ENCODE measurements at regions of chr19 and their contacts with region 1.

Region 1: GRCh38 chr19:12117203-12117970 is 22.8 kb downstream of the ZNF20 start:
- DNase-seq: no peak
- ATAC-seq: no peak
- H3K4me3 ChIP-seq: no peak overlapping the region
- H3K27ac ChIP-seq: no peak overlapping the region
- H3K4me1 ChIP-seq: no peaks in the 10 kb centered on the region
- H3K27me3 ChIP-seq: no peaks in the 10 kb centered on the region
- CTCF ChIP-seq: no peak
- POLR2A ChIP-seq: no peak
- RAD21 ChIP-seq: no peak

Region 2: GRCh38 chr19:11581740-11582139 is 535.6 kb before region 1 on chr19:
- CTCF ChIA-PET with region 1: no interaction called
- POLR2A ChIA-PET with region 1: no interaction called
- dilution Hi-C with region 1: no loop called
- in situ Hi-C with region 1: no loop called
- intact Hi-C with region 1: no loop called
- DNase-seq: peak; percentile 52
- ATAC-seq: peak; percentile 67
- H3K4me3 ChIP-seq: no peak overlapping the region
- H3K27ac ChIP-seq: no peak overlapping the region
- H3K4me1 ChIP-seq: peaks cover 4% of the 10 kb centered on the region
- H3K27me3 ChIP-seq: peaks cover 3% of the 10 kb centered on the region; the same call in 1 of the 2 replicates
- CTCF ChIP-seq: no peak
- POLR2A ChIP-seq: no peak
- RAD21 ChIP-seq: no peak

Region 3: DNA sequence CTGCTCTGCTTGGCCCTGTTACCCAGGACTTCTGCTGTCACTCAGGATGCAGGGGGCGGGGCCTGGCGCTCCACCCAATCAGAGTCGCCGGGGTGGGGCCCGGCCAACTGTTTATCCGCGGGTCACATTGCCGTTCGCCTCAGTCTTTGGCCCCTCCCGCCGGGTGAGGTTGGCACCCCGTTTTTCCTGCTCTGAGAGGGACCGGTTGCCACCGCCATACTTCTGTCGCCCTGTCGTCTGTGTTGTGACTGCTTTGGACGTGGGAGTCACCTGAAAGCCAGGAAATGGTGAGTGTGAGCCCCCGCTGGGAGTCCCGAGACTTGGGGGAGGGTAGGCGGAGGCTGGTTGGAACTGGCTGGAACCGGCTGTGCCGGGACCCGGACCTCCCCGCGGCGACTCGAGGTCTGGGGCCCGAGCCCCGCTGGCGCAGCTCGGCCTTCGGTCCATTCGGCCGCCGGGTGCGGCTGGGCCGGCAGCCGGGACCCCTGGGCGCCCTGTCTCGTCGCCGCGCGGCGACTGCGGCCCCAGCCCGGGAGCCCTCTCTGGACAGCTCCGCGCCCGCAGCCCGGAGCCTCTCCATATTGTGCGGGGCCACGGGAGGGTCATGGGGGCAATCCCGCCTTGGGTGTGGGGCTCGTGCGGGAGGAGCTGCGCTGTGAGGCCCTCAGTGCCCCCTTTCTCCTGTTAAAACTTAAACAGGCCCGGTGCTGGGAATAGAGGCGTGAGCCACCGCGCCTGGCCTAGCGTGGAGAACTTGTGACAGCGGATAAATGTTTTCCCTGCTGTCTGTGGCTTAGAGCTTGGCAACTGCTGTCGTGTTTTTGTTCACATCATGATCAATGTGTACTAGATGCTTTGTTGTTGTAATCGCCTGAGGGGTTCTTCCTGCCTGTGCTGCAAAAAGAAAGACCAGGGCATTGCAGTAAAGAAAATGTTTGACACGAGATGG is 52.5 kb before region 1 on chr19 and contains the start of gene ZNF844:
- CTCF ChIA-PET with region 1: no interaction called
- POLR2A ChIA-PET with region 1: interaction called, 11 read pairs
- dilution Hi-C with region 1: no loop called
- in situ Hi-C with region 1: no loop called
- intact Hi-C with region 1: no loop called
- DNase-seq: peak; percentile 81
- ATAC-seq: peak; percentile 98
- H3K4me3 ChIP-seq: peak within 1 kb of the TSS; percentile 91
- H3K27ac ChIP-seq: peak within 1 kb of the TSS; percentile 89
- H3K4me1 ChIP-seq: no peaks in the 10 kb centered on the region; the same call in 1 of the 2 replicates
- H3K27me3 ChIP-seq: no peaks in the 10 kb centered on the region
- CTCF ChIP-seq: no peak
- POLR2A ChIP-seq: peak; percentile 90
- RAD21 ChIP-seq: no peak
- total RNA-seq, gene ZNF844: 8.1 and 12.0 TPM in 2 replicates

Region 4: GRCh38 chr19:12544401-12544876 is 427.1 kb after region 1 on chr19:
- CTCF ChIA-PET with region 1: no interaction called
- POLR2A ChIA-PET with region 1: interaction called, 13 read pairs
- dilution Hi-C with region 1: no loop called
- in situ Hi-C with region 1: no loop called
- intact Hi-C with region 1: no loop called
- DNase-seq: peak; percentile 19
- ATAC-seq: peak; percentile 21; the same call in 1 of the 2 replicates
- H3K4me3 ChIP-seq: no peak overlapping the region
- H3K27ac ChIP-seq: no peak overlapping the region
- H3K4me1 ChIP-seq: no peaks in the 10 kb centered on the region
- H3K27me3 ChIP-seq: no peaks in the 10 kb centered on the region
- CTCF ChIP-seq: no peak
- POLR2A ChIP-seq: no peak
- RAD21 ChIP-seq: no peak